T-cell (primary cell): ENCODE measurements at regions of chr5 and their contacts with region 1.

Region 1: GRCh38 chr5:151115274-151115905 is 34.6 kb upstream of the TNIP1 start:
- DNase-seq: peak; percentile 29 to 81 (median 67)
- ATAC-seq: peak; percentile 78 to 90 (median 81)
- H3K4me3 ChIP-seq: no peak overlapping the region
- H3K4me3 Mint-ChIP-seq: no peak overlapping the region
- H3K27ac ChIP-seq: no peak overlapping the region
- H3K27ac Mint-ChIP-seq: peak overlapping the region in 1 of 2 donors; percentile 28
- H3K4me1 ChIP-seq: peaks cover 2 to 7% of the 10 kb centered on the region in 2 experiments
- H3K4me1 Mint-ChIP-seq: peaks cover 8 to 15% (median 13%) of the 10 kb centered on the region in 3 donors
- H3K27me3 ChIP-seq: no peaks in the 10 kb centered on the region
- H3K27me3 Mint-ChIP-seq: no peaks in the 10 kb centered on the region

Region 2: DNA sequence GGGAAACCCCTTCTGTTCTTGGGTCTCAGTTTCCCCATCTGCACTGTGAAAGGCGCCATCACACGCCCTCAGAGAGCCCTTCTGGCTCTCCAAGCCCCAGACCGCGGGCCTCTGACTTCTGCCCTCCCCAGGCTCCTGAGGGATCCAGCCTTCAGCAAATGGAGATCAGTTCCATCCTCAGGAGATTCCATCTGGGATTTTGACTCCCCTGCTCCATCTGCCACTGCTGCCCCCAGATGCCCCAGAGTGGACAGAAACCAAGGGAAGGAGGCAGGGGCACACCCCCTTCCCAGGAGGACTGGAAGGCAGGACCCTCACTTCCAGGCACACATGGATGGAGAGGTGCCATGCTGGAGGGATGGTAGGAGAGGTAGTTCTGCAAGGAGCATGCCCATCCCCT is 647.2 kb before region 1 on chr5:
- CTCF ChIA-PET with region 1: interaction called in 1 of 2 experiments, 12 read pairs
- POLR2A ChIA-PET with region 1: no interaction called
- DNase-seq: no peak
- ATAC-seq: no peak
- H3K4me3 ChIP-seq: no peak overlapping the region
- H3K4me3 Mint-ChIP-seq: no peak overlapping the region
- H3K27ac ChIP-seq: no peak overlapping the region
- H3K27ac Mint-ChIP-seq: no peak overlapping the region
- H3K4me1 ChIP-seq: no peaks in the 10 kb centered on the region
- H3K4me1 Mint-ChIP-seq: no peaks in the 10 kb centered on the region
- H3K27me3 ChIP-seq: peaks cover 0 to 22% of the 10 kb centered on the region in 2 experiments
- H3K27me3 Mint-ChIP-seq: peaks cover 0 to 2% of the 10 kb centered on the region in 2 donors

Region 3: GRCh38 chr5:151051066-151051930 is 64.1 kb before region 1 on chr5:
- CTCF ChIA-PET with region 1: interaction called, 108 to 110 read pairs
- POLR2A ChIA-PET with region 1: no interaction called
- DNase-seq: peak; percentile 37 to 84 (median 63)
- ATAC-seq: peak; percentile 62 to 80 (median 76)
- H3K4me3 ChIP-seq: no peak overlapping the region
- H3K4me3 Mint-ChIP-seq: no peak overlapping the region
- H3K27ac ChIP-seq: no peak overlapping the region
- H3K27ac Mint-ChIP-seq: peak overlapping the region in 1 of 2 donors; percentile 46
- H3K4me1 ChIP-seq: no peaks in the 10 kb centered on the region
- H3K4me1 Mint-ChIP-seq: peaks cover 10 to 13% (median 13%) of the 10 kb centered on the region in 3 donors
- H3K27me3 ChIP-seq: no peaks in the 10 kb centered on the region
- H3K27me3 Mint-ChIP-seq: no peaks in the 10 kb centered on the region

Region 4: DNA sequence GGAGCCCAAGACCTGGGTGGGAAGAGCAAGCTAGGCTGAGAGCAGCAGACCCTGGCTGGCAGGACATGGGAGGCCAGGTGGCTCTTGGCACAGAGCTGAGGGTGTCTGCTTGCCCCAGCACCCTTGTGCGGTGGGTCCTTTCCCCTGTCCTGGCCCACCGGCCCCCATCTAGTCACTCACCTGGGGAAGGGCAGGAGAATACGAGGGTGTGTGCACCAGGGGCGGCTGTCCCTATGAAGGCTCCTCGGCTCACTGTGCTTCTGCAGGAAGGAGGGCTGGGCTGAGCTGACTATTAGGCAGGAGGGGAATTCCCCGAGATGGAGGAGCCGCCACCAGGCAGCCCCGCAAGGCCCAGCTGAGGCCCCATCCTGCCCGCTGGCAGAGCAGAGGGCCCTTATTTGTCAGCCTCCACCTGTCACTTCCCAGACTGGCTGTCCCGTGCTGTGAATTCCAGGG is 28.5 kb before region 1 on chr5:
- CTCF ChIA-PET with region 1: interaction called, 12 to 13 read pairs
- POLR2A ChIA-PET with region 1: interaction called, 5 to 15 read pairs
- DNase-seq: peak; percentile 26 to 84 (median 57)
- ATAC-seq: peak; percentile 78 to 87 (median 86)
- H3K4me3 ChIP-seq: peak overlapping the region in 1 of 2 donors; percentile 43
- H3K4me3 Mint-ChIP-seq: peak overlapping the region; percentile 48 to 76 (median 69)
- H3K27ac ChIP-seq: peak overlapping the region; percentile 75
- H3K27ac Mint-ChIP-seq: peak overlapping the region; percentile 62 to 67
- H3K4me1 ChIP-seq: peaks cover 24 to 55% of the 10 kb centered on the region in 2 experiments
- H3K4me1 Mint-ChIP-seq: peaks cover 55 to 61% (median 59%) of the 10 kb centered on the region in 3 donors
- H3K27me3 ChIP-seq: no peaks in the 10 kb centered on the region
- H3K27me3 Mint-ChIP-seq: no peaks in the 10 kb centered on the region

Region 5: DNA sequence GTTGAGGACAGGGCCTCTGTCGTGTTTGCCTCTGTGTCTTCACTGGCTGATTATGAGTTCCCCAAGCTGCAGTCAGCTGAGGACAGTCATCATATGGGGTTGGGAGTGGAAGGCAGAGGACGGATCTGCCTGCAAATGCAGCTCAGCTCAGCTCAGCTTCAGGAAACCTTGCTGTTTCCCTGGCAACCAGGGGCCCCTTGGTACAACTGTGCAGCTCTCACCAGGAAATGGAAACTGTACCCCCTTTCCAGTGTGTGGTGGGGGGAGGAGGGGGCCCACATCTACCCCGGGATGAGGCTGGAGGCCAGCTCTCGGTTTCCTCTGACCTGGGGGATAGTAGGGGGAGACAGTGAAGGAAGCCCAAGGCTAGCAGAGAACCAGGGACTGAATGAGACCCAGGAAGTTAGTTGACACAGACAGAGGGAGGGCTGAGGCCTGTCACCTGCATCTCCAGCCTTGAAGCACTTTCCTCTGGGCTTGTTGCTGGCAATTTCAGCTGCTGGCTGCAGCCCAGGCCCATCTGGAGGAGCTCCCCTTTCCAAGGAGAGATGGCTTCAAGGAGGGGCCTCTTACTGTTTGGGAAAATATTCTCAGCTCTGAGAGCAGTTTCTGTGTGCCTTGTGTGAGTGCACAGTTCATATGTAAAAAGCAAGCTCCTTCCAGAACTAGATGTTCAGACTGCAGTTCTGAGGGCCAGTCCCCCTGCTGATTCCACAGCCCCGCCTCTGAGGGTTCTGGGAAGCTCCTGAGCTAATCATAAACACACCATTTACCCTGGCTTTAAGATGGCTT is 35.3 kb after region 1 on chr5:
- CTCF ChIA-PET with region 1: interaction called, 7 to 14 read pairs
- POLR2A ChIA-PET with region 1: no interaction called
- DNase-seq: peak; percentile 45 to 86 (median 77)
- ATAC-seq: peak; percentile 81 to 93 (median 86)
- H3K4me3 ChIP-seq: peak overlapping the region; percentile 12 to 68
- H3K4me3 Mint-ChIP-seq: peak overlapping the region; percentile 42 to 96 (median 52)
- H3K27ac ChIP-seq: peak overlapping the region; percentile 89
- H3K27ac Mint-ChIP-seq: peak overlapping the region; percentile 96 to 98
- H3K4me1 ChIP-seq: peaks cover 90 to 100% of the 10 kb centered on the region in 2 experiments
- H3K4me1 Mint-ChIP-seq: peaks cover 97 to 100% (median 99%) of the 10 kb centered on the region in 3 donors
- H3K27me3 ChIP-seq: no peaks in the 10 kb centered on the region
- H3K27me3 Mint-ChIP-seq: no peaks in the 10 kb centered on the region